Caco-2 (cell line): ENCODE measurements at regions of chr7 and their contacts with region 1.

Region 1: DNA sequence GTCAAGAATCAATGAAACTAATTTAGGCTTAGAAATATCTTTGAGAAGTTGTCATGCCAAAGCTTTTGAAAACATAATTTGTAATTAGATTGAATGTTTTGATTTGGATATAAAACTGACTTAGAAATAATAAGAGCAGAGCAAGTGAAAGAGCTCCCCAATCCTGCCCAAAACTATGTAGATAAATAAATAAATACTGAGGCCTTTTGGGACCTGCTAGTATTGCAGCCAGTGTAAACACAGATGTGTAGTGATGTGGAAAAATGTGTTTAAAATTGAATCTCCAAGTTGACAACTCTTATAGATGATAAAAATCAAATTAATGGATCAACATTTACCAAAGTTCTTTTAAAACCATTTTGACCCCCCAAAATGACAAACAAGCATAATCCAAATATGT is 896.1 kb downstream of the CNTNAP2 start:
- DNase-seq: no peak
- H3K4me3 ChIP-seq: no peak overlapping the region
- H3K4me3 Mint-ChIP-seq: no peak overlapping the region
- H3K27ac Mint-ChIP-seq: no peak overlapping the region
- H3K4me1 ChIP-seq: peaks cover 20% of the 10 kb centered on the region
- H3K4me1 Mint-ChIP-seq: peaks cover 15% of the 10 kb centered on the region
- H3K27me3 ChIP-seq: no peaks in the 10 kb centered on the region
- H3K27me3 Mint-ChIP-seq: no peaks in the 10 kb centered on the region
- CTCF ChIP-seq: no peak

Region 2: DNA sequence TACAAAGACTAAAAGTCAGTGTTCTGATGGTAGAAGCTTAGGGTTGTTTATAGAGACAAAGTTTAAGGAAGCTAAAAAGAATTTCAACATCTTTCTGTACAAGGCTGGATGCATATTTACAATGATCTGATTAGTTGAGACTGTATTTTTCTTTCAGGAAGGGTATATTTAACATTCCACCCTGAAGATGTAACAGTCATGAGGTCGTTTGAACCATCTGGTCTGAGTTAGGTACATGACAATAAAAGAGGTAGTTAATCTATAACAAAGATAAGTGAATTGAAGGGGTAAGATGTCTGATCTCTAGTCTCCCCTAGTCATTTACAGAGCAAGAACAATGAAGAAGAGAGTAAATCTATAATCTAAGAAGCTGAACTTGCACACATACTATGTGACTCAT is 74.8 kb before region 1 on chr7:
- CTCF ChIA-PET with region 1: no interaction called
- POLR2A ChIA-PET with region 1: no interaction called
- intact Hi-C with region 1: loop called (anchors 1 kb)
- DNase-seq: peak in 1 of 2 experiments; percentile 58
- H3K4me3 ChIP-seq: no peak overlapping the region
- H3K4me3 Mint-ChIP-seq: peak overlapping the region; percentile 27
- H3K27ac Mint-ChIP-seq: peak overlapping the region; percentile 61
- H3K4me1 ChIP-seq: peaks cover 39% of the 10 kb centered on the region
- H3K4me1 Mint-ChIP-seq: peaks cover 8% of the 10 kb centered on the region
- H3K27me3 ChIP-seq: no peaks in the 10 kb centered on the region
- H3K27me3 Mint-ChIP-seq: no peaks in the 10 kb centered on the region
- CTCF ChIP-seq: no peak

Region 3: GRCh38 chr7:146982482-146982881 is 30.2 kb before region 1 on chr7:
- CTCF ChIA-PET with region 1: no interaction called
- POLR2A ChIA-PET with region 1: no interaction called
- intact Hi-C with region 1: loop called (anchors 2 kb)
- DNase-seq: no peak
- H3K4me3 ChIP-seq: no peak overlapping the region
- H3K4me3 Mint-ChIP-seq: no peak overlapping the region
- H3K27ac Mint-ChIP-seq: no peak overlapping the region
- H3K4me1 ChIP-seq: peaks cover 6% of the 10 kb centered on the region
- H3K4me1 Mint-ChIP-seq: peaks cover 12% of the 10 kb centered on the region
- H3K27me3 ChIP-seq: no peaks in the 10 kb centered on the region
- H3K27me3 Mint-ChIP-seq: no peaks in the 10 kb centered on the region
- CTCF ChIP-seq: no peak